ENCODE measurements at regions of chr12 and their contacts with region 1.

Region 1: GRCh38 chr12:90959538-90960139 is 4.7 kb upstream of the CCER1 start:
- DNase-seq: no peak
- H3K4me3 Mint-ChIP-seq: no peak overlapping the region
- H3K27ac Mint-ChIP-seq: no peak overlapping the region
- H3K4me1 Mint-ChIP-seq: no peaks in the 10 kb centered on the region
- H3K27me3 Mint-ChIP-seq: no peaks in the 10 kb centered on the region

Region 2: GRCh38 chr12:90940872-90941499 is 18.7 kb before region 1 on chr12:
- intact Hi-C with region 1: loop called (anchors 1 kb)
- DNase-seq: no peak
- H3K4me3 Mint-ChIP-seq: no peak overlapping the region
- H3K27ac Mint-ChIP-seq: no peak overlapping the region
- H3K4me1 Mint-ChIP-seq: no peaks in the 10 kb centered on the region
- H3K27me3 Mint-ChIP-seq: peaks cover 4% of the 10 kb centered on the region

Region 3: GRCh38 chr12:91040096-91040755 is 80.6 kb after region 1 on chr12:
- intact Hi-C with region 1: no loop called
- DNase-seq: no peak
- H3K4me3 Mint-ChIP-seq: no peak overlapping the region
- H3K27ac Mint-ChIP-seq: no peak overlapping the region
- H3K4me1 Mint-ChIP-seq: no peaks in the 10 kb centered on the region
- H3K27me3 Mint-ChIP-seq: no peaks in the 10 kb centered on the region

Region 4: GRCh38 chr12:91127751-91128150 is 168.1 kb after region 1 on chr12:
- intact Hi-C with region 1: no loop called
- DNase-seq: no peak
- H3K4me3 Mint-ChIP-seq: no peak overlapping the region
- H3K27ac Mint-ChIP-seq: no peak overlapping the region
- H3K4me1 Mint-ChIP-seq: no peaks in the 10 kb centered on the region
- H3K27me3 Mint-ChIP-seq: peaks cover 2% of the 10 kb centered on the region

Measured in activated T-helper 1 cell treated with anti-CD3 and anti-CD28 coated beads, Interleukin-12 subunit alpha, Interleukin-12 subunit beta, Interleukin-2, Interleukin-4 antibody, amounts not matched to agents 30 ng/mL and 10 ng/mL and 1 ng/mL, durations not matched to agents 14 hours and 24 hours and 36 hours (primary cell).